Calu3 (cell line): ENCODE measurements at regions of chr11 and their contacts with region 1.

Region 1: DNA sequence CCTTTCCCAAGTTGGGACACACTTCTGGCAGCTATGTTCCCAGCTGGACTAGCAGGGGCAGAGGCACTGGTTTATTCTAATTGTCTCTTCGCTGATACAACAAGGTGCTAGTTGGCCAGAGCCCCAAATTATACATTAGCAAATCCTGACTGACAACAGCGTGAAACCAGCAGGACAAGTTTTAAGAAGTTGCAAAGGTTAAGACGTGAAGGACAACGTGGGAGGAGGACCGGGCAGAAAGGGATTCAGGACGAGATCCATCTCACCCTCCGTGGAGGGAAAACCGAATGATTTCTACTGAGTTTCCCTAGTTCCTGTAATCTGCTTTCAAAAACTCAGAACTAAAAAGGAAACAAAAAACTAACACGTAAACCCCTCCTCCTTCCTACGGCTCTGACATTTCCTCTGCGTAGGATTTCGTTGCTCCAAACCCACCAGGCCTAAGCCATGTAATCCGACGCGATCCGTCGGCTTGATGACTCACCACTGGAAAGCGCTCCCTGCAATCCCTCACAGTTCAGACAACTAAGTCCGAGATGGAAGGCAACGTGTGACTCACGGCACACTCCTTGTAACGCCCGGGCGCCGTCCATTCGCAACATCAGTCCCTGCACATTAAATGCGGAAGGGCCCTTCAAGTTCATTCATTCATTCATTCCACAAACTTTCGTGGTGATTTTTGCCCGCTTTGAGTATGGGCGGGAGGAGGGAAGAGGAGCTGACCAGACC is 703 bp downstream of the POGLUT3 start:
- DNase-seq: peak; percentile 74
- H3K4me3 Mint-ChIP-seq: peak overlapping the region; percentile 62
- H3K27ac Mint-ChIP-seq: peak overlapping the region; percentile 83
- H3K4me1 Mint-ChIP-seq: peaks cover 10% of the 10 kb centered on the region
- H3K27me3 Mint-ChIP-seq: no peaks in the 10 kb centered on the region
- CTCF ChIP-seq: no peak

Region 2: GRCh38 chr11:108467091-108467823 is 30.2 kb before region 1 on chr11 and contains the start of gene C11orf65:
- CTCF ChIA-PET with region 1: no interaction called
- intact Hi-C with region 1: loop called (anchors 1 kb)
- DNase-seq: peak; percentile 90
- H3K4me3 Mint-ChIP-seq: peak within 1 kb of the TSS; percentile 98
- H3K27ac Mint-ChIP-seq: peak within 1 kb of the TSS; percentile 100
- H3K4me1 Mint-ChIP-seq: no peaks in the 10 kb centered on the region
- H3K27me3 Mint-ChIP-seq: no peaks in the 10 kb centered on the region
- CTCF ChIP-seq: no peak
- total RNA-seq, gene C11orf65: not detected in 2 replicates

Region 3: GRCh38 chr11:108593214-108593922 is 95.9 kb after region 1 on chr11 and contains the start of gene EXPH5:
- CTCF ChIA-PET with region 1: no interaction called
- intact Hi-C with region 1: loop called (anchors 5 kb)
- DNase-seq: peak; percentile 95
- H3K4me3 Mint-ChIP-seq: peak within 1 kb of the TSS; percentile 86
- H3K27ac Mint-ChIP-seq: peak within 1 kb of the TSS; percentile 92
- H3K4me1 Mint-ChIP-seq: peaks cover 10% of the 10 kb centered on the region
- H3K27me3 Mint-ChIP-seq: no peaks in the 10 kb centered on the region
- CTCF ChIP-seq: no peak
- total RNA-seq, gene EXPH5: 14.0 and 17.0 TPM in 2 replicates